AG04449 (cell line): ENCODE measurements at regions of chr17 and their contacts with region 1.

Region 1: DNA sequence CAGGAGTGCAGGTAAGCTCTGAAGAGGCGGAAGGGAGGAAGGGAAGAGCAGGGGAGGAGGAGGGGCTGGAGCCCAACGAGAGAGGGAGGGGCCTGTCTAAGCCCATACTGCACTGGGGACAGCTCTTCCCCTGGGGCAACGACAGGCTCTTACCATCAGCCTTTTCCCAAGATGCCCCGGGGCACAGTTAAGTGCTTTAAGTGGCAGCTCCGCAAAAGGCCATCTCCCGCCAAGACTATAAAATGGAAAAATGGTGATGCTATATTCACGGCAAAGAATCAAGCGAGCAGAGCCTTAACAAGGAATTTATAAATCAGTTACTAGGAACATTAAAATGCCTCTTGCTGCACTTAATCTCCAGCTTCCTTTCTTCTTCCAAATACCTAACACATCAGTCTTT is 110.2 kb upstream of the NLRP1 start:
- DNase-seq: no peak
- H3K4me3 ChIP-seq: no peak overlapping the region
- CTCF ChIP-seq: no peak

Region 2: DNA sequence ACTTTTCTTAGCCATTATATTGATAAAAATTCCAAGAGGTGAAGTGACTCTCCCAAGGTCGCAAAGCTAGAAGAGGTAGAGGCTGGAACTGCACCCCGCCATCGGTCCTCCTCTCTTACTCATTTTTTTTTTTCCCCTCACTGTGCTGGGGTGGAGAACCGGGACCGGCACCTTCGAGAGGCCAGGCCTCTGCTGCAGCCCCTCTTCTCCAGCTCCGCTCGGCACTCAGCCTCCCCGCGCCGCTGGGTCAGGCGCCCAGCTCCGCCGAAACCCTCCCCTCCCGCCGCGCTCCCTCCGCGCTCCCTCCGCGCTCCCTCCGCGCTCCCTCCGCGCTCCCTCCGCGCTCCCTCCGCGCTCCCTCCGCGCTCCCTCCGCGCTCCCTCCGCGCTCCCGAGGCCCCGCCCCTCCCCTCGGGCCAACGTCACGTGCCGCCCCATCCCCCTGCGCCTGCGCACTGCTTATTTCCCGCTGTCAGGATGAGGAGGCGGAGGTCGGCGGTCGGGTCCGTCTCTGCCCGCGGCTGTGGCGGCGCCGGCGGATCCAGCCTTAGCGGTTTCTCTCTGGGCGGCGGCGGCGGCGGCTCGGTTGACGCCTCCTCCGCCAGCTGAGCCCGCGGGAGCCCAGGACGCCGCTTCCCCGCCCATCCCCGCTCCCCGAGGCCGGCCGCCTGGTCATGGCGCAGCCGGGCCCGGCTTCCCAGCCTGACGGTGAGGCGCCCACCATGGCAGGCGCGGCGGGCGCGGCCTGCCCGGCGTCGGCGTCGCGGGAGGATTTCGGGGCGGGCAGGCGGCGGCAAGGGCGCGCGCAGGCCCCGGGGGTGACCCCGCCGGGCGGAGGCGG is 412.5 kb before region 1 on chr17 and contains the start of gene RABEP1:
- CTCF ChIA-PET with region 1: no interaction called
- POLR2A ChIA-PET with region 1: no interaction called
- DNase-seq: peak; percentile 23
- H3K4me3 ChIP-seq: peak within 1 kb of the TSS; percentile 71
- CTCF ChIP-seq: no peak

Region 3: GRCh38 chr17:5706577-5707216 is 12.1 kb after region 1 on chr17:
- CTCF ChIA-PET with region 1: interaction called, 29 read pairs
- POLR2A ChIA-PET with region 1: no interaction called
- DNase-seq: peak; percentile 10
- H3K4me3 ChIP-seq: no peak overlapping the region
- CTCF ChIP-seq: peak; percentile 92

Region 4: DNA sequence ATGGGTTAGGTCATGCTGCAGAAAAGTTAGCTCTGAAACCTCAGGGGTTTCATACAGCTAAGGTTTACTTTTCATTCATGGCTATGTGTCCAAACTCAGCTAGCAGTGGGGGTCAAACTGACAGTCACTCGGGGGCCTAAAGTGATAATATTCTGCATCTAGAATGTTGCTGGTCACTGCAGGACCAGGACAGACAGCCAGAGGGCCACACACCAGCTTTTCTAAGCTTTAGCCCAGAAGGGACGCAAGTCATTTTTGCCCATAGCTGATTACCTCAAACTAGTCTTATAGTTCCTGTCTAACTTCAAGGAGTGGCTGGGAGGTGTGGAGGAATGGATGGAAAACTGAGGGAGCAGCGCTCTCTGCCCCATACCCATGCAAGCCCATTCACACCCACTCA is 52.7 kb after region 1 on chr17:
- CTCF ChIA-PET with region 1: no interaction called
- POLR2A ChIA-PET with region 1: no interaction called
- DNase-seq: no peak
- H3K4me3 ChIP-seq: no peak overlapping the region
- CTCF ChIP-seq: no peak